ENCODE measurements at regions of chr7 and their contacts with region 1.

Region 1: DNA sequence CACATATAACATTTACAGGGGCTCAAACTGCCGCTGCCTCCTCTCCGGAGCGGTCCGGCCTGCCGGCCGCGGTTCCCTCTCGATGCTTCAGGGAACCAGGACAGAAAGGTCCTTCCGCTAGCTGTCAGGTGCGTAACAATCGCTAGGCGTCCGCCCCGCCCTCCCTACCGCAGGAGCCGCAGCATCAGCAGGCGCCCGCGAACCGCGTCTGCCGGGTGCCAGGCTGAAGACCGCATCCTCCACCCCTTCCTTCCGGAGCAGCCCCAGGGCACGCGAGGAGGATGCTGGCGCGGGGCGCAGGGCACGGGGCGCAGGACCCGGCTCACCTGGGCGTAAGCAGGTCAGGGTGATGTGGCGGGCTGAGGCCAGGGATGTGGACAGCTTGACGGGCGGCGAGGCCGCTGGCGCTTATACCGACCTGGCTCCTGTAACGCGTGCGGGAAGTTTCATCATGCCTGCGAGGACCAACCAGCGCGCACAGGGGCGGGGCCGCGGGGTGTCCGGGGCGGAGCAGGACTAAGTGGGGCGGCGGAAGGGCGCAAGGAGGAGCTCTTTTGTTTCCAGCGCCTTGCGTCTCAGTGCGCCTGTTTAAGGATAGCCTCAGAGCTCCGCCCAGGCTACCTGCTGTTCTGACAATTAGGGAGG is at the start of gene ASNS:
- DNase-seq: peak; percentile 95
- H3K4me3 Mint-ChIP-seq: peak within 1 kb of the TSS; percentile 88
- H3K27ac Mint-ChIP-seq: peak within 1 kb of the TSS; percentile 93
- H3K4me1 Mint-ChIP-seq: peaks cover 25% of the 10 kb centered on the region
- H3K27me3 Mint-ChIP-seq: no peaks in the 10 kb centered on the region
- total RNA-seq, gene ASNS: 332 to 337 TPM

Region 2: GRCh38 chr7:96285579-96285978 is 1586.6 kb before region 1 on chr7:
- CTCF ChIA-PET with region 1: no interaction called
- intact Hi-C with region 1: loop called (anchors 10 kb)
- DNase-seq: peak; percentile 39
- H3K4me3 Mint-ChIP-seq: no peak overlapping the region
- H3K27ac Mint-ChIP-seq: peak overlapping the region; percentile 79
- H3K4me1 Mint-ChIP-seq: peaks cover 38% of the 10 kb centered on the region
- H3K27me3 Mint-ChIP-seq: no peaks in the 10 kb centered on the region

Region 3: DNA sequence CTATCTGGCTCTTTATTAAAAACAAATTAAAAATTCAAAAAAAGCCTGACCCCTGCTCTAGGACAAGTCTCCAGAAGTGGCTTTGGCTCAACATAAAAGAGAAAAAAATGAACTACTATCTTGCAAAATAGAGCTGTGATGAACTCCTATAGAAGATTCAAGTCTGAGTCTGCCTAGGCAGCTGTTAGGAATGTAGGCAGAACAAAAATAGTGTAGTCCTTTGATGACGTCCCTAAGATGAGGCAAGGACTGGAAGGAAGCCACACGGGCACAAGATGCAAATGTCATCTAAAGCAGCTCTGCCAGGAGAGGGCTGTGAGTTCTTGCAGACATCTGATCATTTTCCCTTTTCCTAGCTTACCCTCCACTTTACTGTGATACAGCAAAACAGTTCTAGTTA is 20.5 kb before region 1 on chr7:
- CTCF ChIA-PET with region 1: interaction called, 3 read pairs
- intact Hi-C with region 1: loop called (anchors 2 kb)
- DNase-seq: no peak
- H3K4me3 Mint-ChIP-seq: no peak overlapping the region
- H3K27ac Mint-ChIP-seq: no peak overlapping the region
- H3K4me1 Mint-ChIP-seq: no peaks in the 10 kb centered on the region
- H3K27me3 Mint-ChIP-seq: no peaks in the 10 kb centered on the region

Region 4: GRCh38 chr7:97971990-97972943 is 100.1 kb after region 1 on chr7:
- CTCF ChIA-PET with region 1: no interaction called
- intact Hi-C with region 1: loop called (anchors 1 kb)
- DNase-seq: peak; percentile 91
- H3K4me3 Mint-ChIP-seq: peak overlapping the region; percentile 94
- H3K27ac Mint-ChIP-seq: peak overlapping the region; percentile 95
- H3K4me1 Mint-ChIP-seq: peaks cover 27% of the 10 kb centered on the region
- H3K27me3 Mint-ChIP-seq: no peaks in the 10 kb centered on the region

Region 5: DNA sequence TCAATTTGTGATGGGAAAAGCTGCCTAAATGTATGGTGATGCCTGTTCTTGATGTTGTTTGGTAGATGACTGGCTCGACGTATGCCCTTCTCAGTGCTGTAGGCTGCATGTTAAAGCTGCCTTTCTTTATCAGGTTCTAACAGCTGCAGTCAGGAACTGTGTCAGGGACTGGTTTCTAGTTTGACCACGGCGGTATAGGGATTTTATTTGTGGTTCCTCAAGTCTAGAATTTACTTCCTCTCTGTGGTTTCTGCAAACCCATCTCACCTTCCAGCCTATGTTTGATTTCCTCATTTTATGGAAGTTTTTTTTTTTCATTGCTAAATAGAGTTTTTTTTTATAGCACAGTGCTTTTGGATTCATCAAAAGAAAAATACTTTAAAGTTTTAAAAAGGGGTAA is 261.0 kb after region 1 on chr7:
- CTCF ChIA-PET with region 1: no interaction called
- intact Hi-C with region 1: loop called (anchors 5 kb)
- DNase-seq: peak; percentile 41
- H3K4me3 Mint-ChIP-seq: no peak overlapping the region
- H3K27ac Mint-ChIP-seq: no peak overlapping the region
- H3K4me1 Mint-ChIP-seq: peaks cover 48% of the 10 kb centered on the region
- H3K27me3 Mint-ChIP-seq: no peaks in the 10 kb centered on the region

Region 6: DNA sequence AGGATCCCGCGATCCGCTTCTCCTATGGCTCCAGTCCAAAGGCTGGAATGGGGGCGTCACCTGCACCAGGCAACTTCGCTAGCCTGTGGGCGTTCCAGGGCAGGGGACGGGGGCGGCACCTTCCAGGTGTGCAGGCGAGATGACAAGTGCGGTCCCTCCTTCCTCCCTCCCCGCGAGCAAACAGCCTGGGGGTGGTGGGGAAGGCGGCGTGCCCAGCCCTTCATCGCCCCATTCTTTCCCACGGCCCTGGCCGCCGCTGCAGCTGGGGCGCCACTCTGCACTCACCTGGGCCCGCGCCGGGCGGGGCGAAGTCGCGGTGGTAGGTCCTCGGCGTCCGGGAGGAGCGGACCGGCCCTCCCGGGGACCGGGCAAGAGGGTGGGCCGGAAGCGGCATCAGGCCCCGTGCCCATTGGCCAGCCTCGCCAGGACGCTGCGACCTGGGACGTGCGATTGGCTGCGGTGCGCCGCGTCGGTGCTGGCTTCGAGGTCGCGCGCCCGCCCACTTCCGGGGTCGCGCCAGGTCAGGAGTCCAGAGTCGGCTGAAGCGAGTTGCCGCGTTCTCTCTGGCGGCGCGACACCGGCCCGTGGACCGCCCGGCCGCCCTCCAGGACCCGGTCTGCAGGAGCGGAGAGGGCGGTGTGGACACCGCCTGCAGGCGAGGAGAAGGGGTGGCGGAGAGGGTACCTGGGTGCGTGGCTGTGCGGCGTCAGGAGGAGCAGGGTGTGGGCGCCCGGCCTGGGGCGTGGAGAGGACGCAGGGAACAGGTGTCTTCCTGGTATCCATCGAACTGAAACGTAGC is 379.9 kb after region 1 on chr7 and contains the start of gene TECPR1:
- CTCF ChIA-PET with region 1: no interaction called
- intact Hi-C with region 1: loop called (anchors 1 kb)
- DNase-seq: peak; percentile 90
- H3K4me3 Mint-ChIP-seq: peak within 1 kb of the TSS; percentile 93
- H3K27ac Mint-ChIP-seq: peak within 1 kb of the TSS; percentile 94
- H3K4me1 Mint-ChIP-seq: peaks cover 53% of the 10 kb centered on the region
- H3K27me3 Mint-ChIP-seq: no peaks in the 10 kb centered on the region
- total RNA-seq, gene TECPR1: 29.8 to 36.7 TPM

Region 7: DNA sequence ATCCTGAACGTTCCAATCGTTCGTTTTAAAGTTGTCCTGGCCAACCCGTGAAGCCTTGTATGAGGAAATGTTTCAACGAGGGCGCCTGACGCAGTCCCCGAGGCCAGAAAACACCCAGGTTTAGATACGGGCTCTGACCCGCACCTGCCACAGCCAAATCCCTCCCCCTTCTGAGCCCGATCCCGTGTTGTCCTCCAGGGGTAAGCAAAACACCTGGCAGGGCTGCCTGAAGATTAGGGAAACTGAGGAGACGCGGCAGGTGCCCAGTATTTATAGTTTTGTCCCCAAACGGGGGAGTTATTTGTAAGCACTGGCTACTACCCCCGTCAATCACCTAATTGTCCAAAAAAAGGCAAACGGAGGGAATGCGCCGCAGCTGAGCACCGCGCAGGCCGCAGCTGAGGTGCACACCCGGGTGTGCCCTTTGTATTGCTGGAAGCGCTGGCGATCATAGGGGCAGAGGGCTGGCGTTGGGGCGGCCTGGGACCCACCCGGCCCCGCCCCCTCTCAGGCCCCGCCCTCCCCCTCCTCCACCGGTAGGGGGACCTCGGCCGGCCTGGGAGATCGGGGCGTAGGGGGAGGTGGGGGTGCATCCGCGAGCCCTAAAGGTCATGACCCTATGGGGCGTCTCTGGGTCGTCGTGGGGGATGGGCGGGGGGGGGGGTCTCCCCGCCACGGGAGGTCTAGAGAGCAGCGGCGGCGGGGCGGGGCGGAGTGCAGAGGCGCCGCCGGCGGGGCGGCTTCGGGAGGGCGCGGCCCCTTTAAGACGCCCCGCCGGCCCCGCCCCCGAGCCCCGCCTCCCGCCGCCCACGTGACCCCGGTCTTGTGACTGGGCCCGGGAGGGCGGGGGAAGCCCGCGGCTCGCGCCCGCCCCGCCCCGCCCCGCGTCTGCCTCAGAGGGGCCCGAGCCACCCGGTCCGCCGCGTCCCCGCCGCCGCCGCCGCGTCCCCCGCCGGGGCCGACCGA is 408.9 kb after region 1 on chr7 and contains the start of gene BRI3:
- CTCF ChIA-PET with region 1: no interaction called
- intact Hi-C with region 1: loop called (anchors 1 kb)
- DNase-seq: peak; percentile 91
- H3K4me3 Mint-ChIP-seq: peak within 1 kb of the TSS; percentile 77
- H3K27ac Mint-ChIP-seq: peak within 1 kb of the TSS; percentile 41
- H3K4me1 Mint-ChIP-seq: peaks cover 29% of the 10 kb centered on the region
- H3K27me3 Mint-ChIP-seq: no peaks in the 10 kb centered on the region
- total RNA-seq, gene BRI3: 51.6 to 54.4 TPM

Measured in activated naive CD4-positive, alpha-beta T cell treated with anti-CD3 and anti-CD28 coated beads for 36 hours (primary cell).